Activated CD4-positive, alpha-beta T cell treated with anti-CD3 and anti-CD28 coated beads, Interleukin-2, amount 10 ng/mL, durations not matched to agents 24 days and 14 days (primary cell): ENCODE measurements at regions of chr15 and their contacts with region 1.

Region 1: GRCh38 chr15:83199288-83199687 is 8.3 kb downstream of the HDGFL3 start:
- DNase-seq: no peak
- H3K4me3 Mint-ChIP-seq: peak overlapping the region; percentile 34
- H3K27ac Mint-ChIP-seq: peak overlapping the region; percentile 93
- H3K4me1 Mint-ChIP-seq: peaks cover 36% of the 10 kb centered on the region
- H3K27me3 Mint-ChIP-seq: peaks cover 28% of the 10 kb centered on the region

Region 2: GRCh38 chr15:82832601-82833361 is 366.5 kb before region 1 on chr15:
- intact Hi-C with region 1: loop called (anchors 5 kb)
- DNase-seq: peak; percentile 80
- H3K4me3 Mint-ChIP-seq: peak overlapping the region; percentile 65
- H3K27ac Mint-ChIP-seq: peak overlapping the region; percentile 95
- H3K4me1 Mint-ChIP-seq: peaks cover 40% of the 10 kb centered on the region
- H3K27me3 Mint-ChIP-seq: no peaks in the 10 kb centered on the region

Region 3: GRCh38 chr15:83164111-83164770 is 35.0 kb before region 1 on chr15:
- intact Hi-C with region 1: loop called (anchors 1 kb)
- DNase-seq: no peak
- H3K4me3 Mint-ChIP-seq: peak overlapping the region; percentile 67
- H3K27ac Mint-ChIP-seq: peak overlapping the region; percentile 91
- H3K4me1 Mint-ChIP-seq: peaks cover 31% of the 10 kb centered on the region
- H3K27me3 Mint-ChIP-seq: peaks cover 17% of the 10 kb centered on the region